PC-9 (cell line): ENCODE measurements at regions of chr6 and their contacts with region 1.

Region 1: GRCh38 chr6:36000451-36000850 is 24.0 kb downstream of the SLC26A8 start:
- DNase-seq: no peak
- H3K4me3 ChIP-seq: no peak overlapping the region
- H3K27ac ChIP-seq: no peak overlapping the region
- H3K4me1 ChIP-seq: no peaks in the 10 kb centered on the region
- H3K27me3 ChIP-seq: no peaks in the 10 kb centered on the region
- CTCF ChIP-seq: no peak

Region 2: DNA sequence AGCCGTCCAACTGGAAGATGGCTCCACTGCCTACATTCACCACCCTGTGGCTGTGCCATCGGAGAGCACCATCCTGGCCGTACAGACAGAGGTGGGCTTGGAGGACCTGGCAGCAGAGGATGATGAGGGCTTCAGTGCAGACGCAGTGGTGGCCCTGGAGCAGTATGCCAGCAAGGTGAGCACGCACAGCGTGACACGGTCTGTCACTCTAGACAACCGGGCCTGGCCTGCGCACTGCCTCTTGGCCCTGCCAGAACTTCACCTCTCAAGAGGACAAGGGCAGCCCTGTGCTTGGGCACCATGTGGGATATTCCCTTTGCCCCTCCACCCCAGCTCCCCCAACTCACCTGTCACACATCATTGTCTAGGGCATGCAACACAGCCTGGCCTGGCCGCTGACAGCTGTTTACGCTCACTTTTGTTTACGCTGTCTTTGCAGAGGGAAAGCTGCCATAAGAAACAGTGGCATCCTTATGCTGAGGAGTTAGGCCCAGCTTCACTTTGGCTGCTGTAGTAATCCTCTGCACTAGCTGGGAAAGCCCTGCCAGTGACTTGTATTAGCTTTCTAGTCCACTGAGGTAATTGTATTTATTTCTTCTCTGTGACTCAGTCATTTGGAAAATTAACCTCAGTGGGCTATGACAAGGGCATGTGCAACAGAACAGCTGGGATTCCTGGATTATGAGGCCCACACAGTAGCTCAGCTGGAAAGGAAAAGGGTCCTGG is 712.6 kb before region 1 on chr6:
- CTCF ChIA-PET with region 1: no interaction called
- POLR2A ChIA-PET with region 1: no interaction called
- intact Hi-C with region 1: no loop called
- DNase-seq: no peak
- H3K4me3 ChIP-seq: no peak overlapping the region
- H3K27ac ChIP-seq: no peak overlapping the region
- H3K4me1 ChIP-seq: no peaks in the 10 kb centered on the region
- H3K27me3 ChIP-seq: no peaks in the 10 kb centered on the region
- CTCF ChIP-seq: no peak

Region 3: GRCh38 chr6:35948725-35949124 is 51.7 kb before region 1 on chr6:
- CTCF ChIA-PET with region 1: no interaction called
- POLR2A ChIA-PET with region 1: no interaction called
- intact Hi-C with region 1: no loop called
- DNase-seq: no peak
- H3K4me3 ChIP-seq: no peak overlapping the region
- H3K27ac ChIP-seq: no peak overlapping the region
- H3K4me1 ChIP-seq: 0 out of 2 replicates have a peak, but pooled peaks cover 9% of the 10 kb centered on the region
- H3K27me3 ChIP-seq: no peaks in the 10 kb centered on the region
- CTCF ChIP-seq: 0 out of 2 replicates have a peak, but pooled peaks have one; percentile 20

Region 4: DNA sequence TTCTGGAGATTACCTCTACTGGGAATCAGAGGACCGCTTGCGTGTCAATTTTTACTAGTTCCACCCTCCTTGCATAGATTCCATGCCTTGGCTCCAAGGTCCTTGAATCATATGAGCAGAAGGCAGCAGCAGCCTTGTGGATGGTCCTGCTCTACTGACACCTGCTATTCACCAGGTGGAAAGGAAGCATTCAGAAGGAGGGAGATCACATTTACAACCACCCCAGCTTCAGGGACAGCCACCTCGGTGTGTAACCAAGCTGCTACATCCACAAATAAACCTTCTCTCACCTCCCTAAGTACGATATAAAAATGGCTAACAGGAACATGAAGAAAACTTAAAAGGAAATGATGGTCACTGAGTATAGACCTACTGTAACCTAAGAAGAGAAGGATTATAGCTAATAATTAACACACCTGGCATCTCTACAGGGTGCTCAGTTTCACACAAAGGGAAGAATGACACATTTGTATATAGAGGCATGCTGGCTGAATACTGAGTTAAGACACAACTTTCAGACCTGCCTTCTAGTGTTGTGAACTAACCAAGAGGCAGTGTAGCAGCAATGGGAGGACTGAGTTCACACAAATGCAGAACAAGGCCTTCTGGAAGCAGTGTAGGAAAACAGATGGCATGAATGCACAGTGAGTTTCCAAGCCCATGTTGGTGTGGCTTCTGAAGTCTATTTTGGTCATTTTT is 33.2 kb before region 1 on chr6:
- CTCF ChIA-PET with region 1: no interaction called
- POLR2A ChIA-PET with region 1: no interaction called
- intact Hi-C with region 1: no loop called
- DNase-seq: no peak
- H3K4me3 ChIP-seq: no peak overlapping the region
- H3K27ac ChIP-seq: no peak overlapping the region
- H3K4me1 ChIP-seq: peaks cover 21% of the 10 kb centered on the region
- H3K27me3 ChIP-seq: no peaks in the 10 kb centered on the region
- CTCF ChIP-seq: no peak

Region 5: DNA sequence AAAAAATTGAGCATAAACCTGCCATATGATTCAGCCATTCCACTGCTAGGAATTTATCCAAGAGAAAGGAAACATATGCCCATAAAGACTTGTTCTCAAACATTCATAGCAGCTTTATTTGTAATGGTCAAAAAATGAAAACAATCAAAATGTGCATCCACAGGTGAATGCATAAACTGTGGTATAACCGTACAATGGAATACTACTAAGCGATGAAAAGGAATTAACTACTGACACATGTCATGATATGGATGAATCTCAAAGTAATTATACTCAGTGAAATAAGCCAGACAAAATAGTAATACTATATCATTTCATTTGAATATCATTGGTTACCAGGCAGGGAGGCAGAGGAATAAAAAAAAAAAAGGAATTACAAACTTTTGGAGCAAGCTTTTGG is 170.3 kb after region 1 on chr6:
- CTCF ChIA-PET with region 1: no interaction called
- POLR2A ChIA-PET with region 1: interaction called, 12 read pairs
- intact Hi-C with region 1: no loop called
- DNase-seq: no peak
- H3K4me3 ChIP-seq: no peak overlapping the region
- H3K27ac ChIP-seq: no peak overlapping the region
- H3K4me1 ChIP-seq: no peaks in the 10 kb centered on the region
- H3K27me3 ChIP-seq: no peaks in the 10 kb centered on the region
- CTCF ChIP-seq: no peak

Region 6: GRCh38 chr6:36248980-36249379 is 248.5 kb after region 1 on chr6:
- CTCF ChIA-PET with region 1: interaction called, 11 read pairs
- POLR2A ChIA-PET with region 1: no interaction called
- intact Hi-C with region 1: no loop called
- DNase-seq: peak in 1 of 2 experiments; percentile 37
- H3K4me3 ChIP-seq: no peak overlapping the region
- H3K27ac ChIP-seq: peak overlapping the region; percentile 50
- H3K4me1 ChIP-seq: peaks cover 50% of the 10 kb centered on the region
- H3K27me3 ChIP-seq: no peaks in the 10 kb centered on the region
- CTCF ChIP-seq: no peak